Head of caudate nucleus (tissue), 42 donors: ENCODE measurements at regions of chr19 and their contacts with region 1.

Region 1: GRCh38 chr19:49817964-49818648 is at the start of gene MED25:
- DNase-seq: peak; percentile 58 to 94 (median 87)

Region 2: DNA sequence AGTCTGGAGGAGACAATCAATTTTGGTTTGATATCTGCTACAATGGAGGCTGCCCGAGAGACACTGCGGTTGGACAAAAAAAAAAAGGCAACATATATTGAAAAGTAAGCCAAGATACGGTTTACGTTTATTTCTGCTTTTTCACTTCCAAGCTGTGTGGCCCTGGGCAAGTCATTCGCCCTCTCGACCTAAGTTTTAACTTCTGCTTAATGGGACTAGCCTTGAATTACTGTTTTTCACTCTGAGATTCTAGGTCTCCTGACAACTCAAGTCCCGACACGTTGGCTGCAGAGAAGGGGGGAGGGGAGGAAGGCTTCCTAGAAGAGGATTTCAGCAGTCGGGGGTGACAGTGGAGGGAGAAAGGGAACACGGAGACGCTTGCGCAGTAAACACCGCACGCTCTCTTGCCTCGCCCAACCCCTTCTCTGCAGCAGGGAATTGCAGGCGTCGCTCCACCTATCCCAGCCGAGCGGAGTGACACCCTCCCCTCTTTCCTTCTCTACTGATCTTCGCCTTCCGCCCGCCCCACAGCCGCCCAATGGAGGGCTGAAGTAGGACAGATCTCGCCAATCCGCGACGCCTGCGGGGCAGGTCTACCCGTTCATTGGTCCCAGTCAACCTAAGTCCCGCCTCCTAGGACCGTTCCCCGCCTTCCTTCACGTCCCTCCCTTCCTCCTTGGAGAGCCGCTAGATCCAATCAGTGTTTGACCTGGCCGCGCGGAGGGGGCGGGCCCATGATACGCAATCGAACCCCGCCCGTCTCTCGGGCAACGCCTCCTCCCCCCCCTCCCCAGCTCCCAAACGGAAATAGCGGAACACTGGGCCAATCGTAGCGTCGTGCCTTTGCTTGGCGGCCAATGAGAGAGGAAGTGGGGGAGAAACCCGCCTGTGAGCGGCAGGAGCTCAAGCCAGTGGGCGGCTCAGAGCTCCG is 51.8 kb before region 1 on chr19:
- intact Hi-C with region 1: loop called (anchors 5 kb)
- DNase-seq: peak; percentile 96 to 100 (median 100)

Region 3: DNA sequence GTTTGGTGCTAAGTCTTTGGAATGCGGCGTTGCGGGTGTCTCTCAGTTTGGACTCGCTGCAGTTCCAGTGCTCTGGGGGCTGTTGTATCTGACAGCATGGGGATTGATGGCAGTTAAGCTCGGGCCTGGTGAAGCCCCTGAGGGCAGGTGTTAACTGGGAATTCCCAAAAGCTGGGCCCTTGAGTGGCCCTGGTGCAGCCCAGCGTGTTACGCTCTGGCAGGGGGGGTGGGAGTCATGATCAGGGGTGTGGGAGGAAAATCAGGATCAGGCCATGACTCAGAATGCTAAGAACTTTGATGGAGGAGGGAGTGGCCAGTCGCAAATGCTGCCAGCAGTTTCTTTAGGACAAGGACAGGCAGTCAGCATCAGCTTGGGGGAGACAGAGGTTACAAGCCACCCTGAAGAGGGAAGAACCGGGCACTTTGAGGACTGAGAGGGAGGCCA is 31.7 kb before region 1 on chr19:
- intact Hi-C with region 1: no loop called
- DNase-seq: no peak

Region 4: GRCh38 chr19:49850473-49851342 is 32.6 kb after region 1 on chr19 and contains the start of gene PTOV1:
- intact Hi-C with region 1: loop called (anchors 5 kb)
- DNase-seq: peak; percentile 86 to 98 (median 95)

Region 5: GRCh38 chr19:49877020-49877878 is 59.1 kb after region 1 on chr19 and contains the starts of genes AKT1S1 and TBC1D17:
- intact Hi-C with region 1: loop called (anchors 5 kb)
- DNase-seq: peak; percentile 97 to 100 (median 99)